Left cardiac atrium (tissue), 4 donors: ENCODE measurements at regions of chr3 and their contacts with region 1.

Region 1: GRCh38 chr3:34683851-34684250 is 885.4 kb downstream of the PDCD6IP start:
- DNase-seq: peak; percentile 67
- ATAC-seq: peak; percentile 68 to 81

Region 2: GRCh38 chr3:33883538-33883950 is 800.3 kb before region 1 on chr3:
- intact Hi-C with region 1: loop called (anchors 2 to 10 kb)
- DNase-seq: no peak
- ATAC-seq: peak; percentile 19 to 54

Region 3: DNA sequence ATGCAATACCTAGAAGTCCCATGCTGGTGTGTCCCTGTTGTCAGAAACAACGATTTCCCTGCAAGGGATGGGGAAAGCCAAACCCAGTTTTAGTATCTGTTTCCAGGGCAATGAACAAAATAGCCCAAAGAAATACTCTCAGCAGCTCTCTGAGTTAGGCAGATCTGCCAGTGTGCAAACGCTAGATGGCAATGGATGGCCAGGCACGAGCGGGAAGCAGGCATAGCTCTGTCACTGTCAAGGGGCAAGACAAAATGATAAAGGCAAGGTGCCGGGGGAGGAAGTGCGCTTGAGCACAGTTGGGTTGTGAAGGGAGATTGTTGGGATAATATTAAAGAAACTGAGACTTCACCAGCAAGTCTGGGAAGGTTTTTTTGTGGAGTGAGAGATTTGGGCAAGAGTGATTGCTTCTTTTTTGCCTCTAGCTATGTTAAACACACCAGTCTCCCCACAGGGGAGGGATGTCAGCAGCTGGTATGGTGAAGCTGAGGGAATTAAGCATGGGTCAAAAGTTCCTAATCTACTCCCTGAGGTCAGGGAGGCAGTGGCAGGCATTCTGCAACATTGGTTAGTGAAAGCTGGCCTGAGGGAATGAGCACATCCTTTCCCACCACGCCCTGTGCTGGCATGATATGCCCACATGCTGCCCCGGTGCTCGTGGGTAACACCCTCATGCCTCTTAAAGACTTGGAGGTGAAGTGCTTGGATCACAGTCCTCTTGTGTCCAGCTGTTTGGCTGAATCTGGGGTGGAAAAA is 767.9 kb before region 1 on chr3:
- intact Hi-C with region 1: loop called in 1 of 2 experiments (anchors 10 kb)
- DNase-seq: no peak
- ATAC-seq: peak; percentile 68 to 73

Region 4: GRCh38 chr3:34260271-34261006 is 423.4 kb before region 1 on chr3:
- intact Hi-C with region 1: loop called (anchors 5 to 10 kb)
- DNase-seq: peak; percentile 56
- ATAC-seq: peak; percentile 56 to 68

Region 5: DNA sequence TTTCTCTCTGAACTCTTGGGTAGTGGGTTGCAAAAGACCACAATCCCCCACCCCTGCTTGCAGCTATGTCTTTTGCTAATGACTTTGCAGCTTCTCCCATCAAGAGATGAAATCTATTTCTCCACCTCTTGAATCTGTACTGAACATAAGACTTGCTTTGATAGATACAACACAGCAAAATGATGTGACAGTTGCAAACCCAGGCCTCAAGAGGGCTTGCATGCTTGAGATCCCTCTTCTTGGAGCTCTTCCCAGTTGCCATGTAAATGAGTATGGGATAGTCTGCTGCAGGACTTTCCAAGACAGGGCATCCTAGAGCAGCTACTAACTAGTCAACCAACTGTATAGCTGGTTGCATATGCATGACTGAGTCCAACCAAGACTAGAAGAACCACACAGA is 101.8 kb before region 1 on chr3:
- intact Hi-C with region 1: no loop called
- DNase-seq: no peak
- ATAC-seq: no peak